Activated B cell treated with CpG ODN at 0.5 μM for 24 hours (primary cell): ENCODE measurements at regions of chr10 and their contacts with region 1.

Region 1: GRCh38 chr10:95716466-95717224 is 22.9 kb upstream of the TCTN3 start:
- DNase-seq: no peak
- ATAC-seq: no peak
- H3K4me3 Mint-ChIP-seq: no peak overlapping the region
- H3K27ac Mint-ChIP-seq: no peak overlapping the region
- H3K4me1 Mint-ChIP-seq: peaks cover 5% of the 10 kb centered on the region
- H3K27me3 Mint-ChIP-seq: no peaks in the 10 kb centered on the region
- CTCF ChIP-seq: no peak

Region 2: DNA sequence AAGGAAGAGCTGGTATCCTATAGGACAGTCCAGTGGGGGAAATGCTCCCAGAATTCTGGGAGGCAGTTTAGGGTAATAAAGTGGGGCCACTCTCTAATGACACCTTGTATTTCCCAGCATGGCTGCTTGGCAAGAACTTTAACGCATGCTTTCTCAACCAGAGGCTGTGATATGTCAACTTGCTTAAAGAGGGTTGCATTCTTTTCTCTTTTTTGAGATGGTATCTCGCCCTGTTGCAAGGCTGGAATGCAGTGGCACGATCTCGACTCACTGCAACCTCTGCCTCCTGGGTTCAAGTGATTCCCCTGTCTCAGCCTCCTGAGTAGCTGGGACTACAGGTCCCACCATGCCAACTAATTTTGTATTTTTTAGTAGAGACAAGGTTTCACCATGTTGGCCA is 98.5 kb before region 1 on chr10:
- CTCF ChIA-PET with region 1: no interaction called
- POLR2A ChIA-PET with region 1: no interaction called
- intact Hi-C with region 1: no loop called
- DNase-seq: no peak
- ATAC-seq: no peak
- H3K4me3 Mint-ChIP-seq: no peak overlapping the region
- H3K27ac Mint-ChIP-seq: no peak overlapping the region
- H3K4me1 Mint-ChIP-seq: no peaks in the 10 kb centered on the region
- H3K27me3 Mint-ChIP-seq: no peaks in the 10 kb centered on the region
- CTCF ChIP-seq: no peak

Region 3: GRCh38 chr10:95728526-95728925 is 11.9 kb after region 1 on chr10:
- CTCF ChIA-PET with region 1: interaction called, 4 read pairs
- POLR2A ChIA-PET with region 1: no interaction called
- intact Hi-C with region 1: loop called (anchors 2 kb)
- DNase-seq: no peak
- ATAC-seq: no peak
- H3K4me3 Mint-ChIP-seq: no peak overlapping the region
- H3K27ac Mint-ChIP-seq: no peak overlapping the region
- H3K4me1 Mint-ChIP-seq: peaks cover 34% of the 10 kb centered on the region
- H3K27me3 Mint-ChIP-seq: no peaks in the 10 kb centered on the region
- CTCF ChIP-seq: no peak

Region 4: DNA sequence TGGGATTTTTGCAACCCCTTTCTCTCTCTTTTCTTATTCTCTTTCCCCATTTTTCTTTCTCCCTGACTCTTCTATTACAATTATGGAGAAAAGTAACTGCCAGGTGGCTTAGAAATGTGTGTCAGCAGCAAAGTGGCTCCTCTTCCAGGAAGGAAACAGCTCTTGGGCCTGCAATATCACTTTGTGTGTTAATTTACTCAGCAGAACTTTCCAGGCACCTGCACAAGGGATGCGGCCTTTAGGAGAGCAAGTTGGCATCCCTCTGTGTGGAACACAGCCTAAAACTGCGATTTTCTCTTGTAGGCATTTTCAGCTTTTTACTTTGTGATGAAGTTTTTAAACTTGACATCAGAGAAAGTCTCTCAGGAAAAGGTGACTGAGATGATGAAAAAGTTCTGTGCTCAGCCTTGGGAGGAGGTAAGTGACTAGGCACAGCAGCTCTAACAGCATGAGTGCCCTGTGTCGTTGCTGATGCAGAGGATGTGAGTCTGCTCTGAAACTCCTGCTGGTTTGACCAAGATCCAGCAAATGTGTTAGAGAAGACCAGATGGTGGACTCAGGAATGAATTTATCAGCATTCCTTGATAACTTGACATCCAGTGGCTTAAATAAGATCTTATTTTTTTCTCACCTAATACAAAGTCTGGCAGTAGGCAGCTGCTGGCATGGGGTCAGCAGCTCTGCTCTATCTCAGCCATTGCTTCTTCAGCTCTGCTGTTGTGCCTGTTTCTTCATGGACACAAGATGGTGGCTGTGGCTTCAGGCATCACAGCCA is 143.7 kb after region 1 on chr10:
- CTCF ChIA-PET with region 1: no interaction called
- POLR2A ChIA-PET with region 1: no interaction called
- intact Hi-C with region 1: no loop called
- DNase-seq: no peak
- ATAC-seq: no peak
- H3K4me3 Mint-ChIP-seq: no peak overlapping the region
- H3K27ac Mint-ChIP-seq: no peak overlapping the region
- H3K4me1 Mint-ChIP-seq: peaks cover 18% of the 10 kb centered on the region
- H3K27me3 Mint-ChIP-seq: no peaks in the 10 kb centered on the region
- CTCF ChIP-seq: no peak

Region 5: DNA sequence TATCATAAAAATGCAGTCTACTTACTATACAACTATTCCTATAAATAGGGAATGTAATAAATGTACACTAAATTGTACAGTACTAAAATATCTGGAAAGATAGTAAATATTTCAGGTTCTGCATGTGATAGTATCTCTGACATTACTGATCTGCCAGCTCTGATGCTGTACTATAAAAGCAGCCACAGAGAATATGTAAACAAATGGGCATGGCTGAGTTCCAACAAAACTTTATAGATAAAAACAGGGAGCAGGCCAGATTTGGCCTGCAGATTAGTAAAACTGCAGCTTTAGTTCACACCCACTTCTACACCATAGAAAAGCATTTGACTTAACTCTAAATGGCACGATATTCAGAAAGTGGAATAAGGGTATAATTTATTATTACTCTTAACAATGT is 815.9 kb after region 1 on chr10:
- CTCF ChIA-PET with region 1: no interaction called
- POLR2A ChIA-PET with region 1: no interaction called
- intact Hi-C with region 1: no loop called
- DNase-seq: no peak
- ATAC-seq: no peak
- H3K4me3 Mint-ChIP-seq: no peak overlapping the region
- H3K27ac Mint-ChIP-seq: no peak overlapping the region
- H3K4me1 Mint-ChIP-seq: peaks cover 14% of the 10 kb centered on the region
- H3K27me3 Mint-ChIP-seq: no peaks in the 10 kb centered on the region
- CTCF ChIP-seq: no peak